ENCODE measurements at regions of chr2 and their contacts with region 1.

Region 1: GRCh38 chr2:68925295-68925896 is 27.3 kb downstream of the GKN2 start:
- DNase-seq: peak; percentile 73
- H3K4me3 Mint-ChIP-seq: no peak overlapping the region
- H3K27ac Mint-ChIP-seq: no peak overlapping the region
- H3K4me1 Mint-ChIP-seq: peaks cover 5% of the 10 kb centered on the region
- H3K27me3 Mint-ChIP-seq: no peaks in the 10 kb centered on the region
- CTCF ChIP-seq: peak; percentile 93

Region 2: GRCh38 chr2:68487773-68488355 is 437.5 kb before region 1 on chr2:
- CTCF ChIA-PET with region 1: interaction called, 14 read pairs
- POLR2A ChIA-PET with region 1: no interaction called
- intact Hi-C with region 1: no loop called
- DNase-seq: peak; percentile 43
- H3K4me3 Mint-ChIP-seq: peak overlapping the region; percentile 28
- H3K27ac Mint-ChIP-seq: no peak overlapping the region
- H3K4me1 Mint-ChIP-seq: peaks cover 6% of the 10 kb centered on the region
- H3K27me3 Mint-ChIP-seq: no peaks in the 10 kb centered on the region
- CTCF ChIP-seq: peak; percentile 40

Region 3: GRCh38 chr2:68715353-68716041 is 209.9 kb before region 1 on chr2:
- CTCF ChIA-PET with region 1: interaction called, 139 read pairs
- POLR2A ChIA-PET with region 1: interaction called, 4 read pairs
- intact Hi-C with region 1: no loop called
- DNase-seq: peak; percentile 79
- H3K4me3 Mint-ChIP-seq: no peak overlapping the region
- H3K27ac Mint-ChIP-seq: no peak overlapping the region
- H3K4me1 Mint-ChIP-seq: no peaks in the 10 kb centered on the region
- H3K27me3 Mint-ChIP-seq: peaks cover 22% of the 10 kb centered on the region
- CTCF ChIP-seq: peak; percentile 79

Region 4: DNA sequence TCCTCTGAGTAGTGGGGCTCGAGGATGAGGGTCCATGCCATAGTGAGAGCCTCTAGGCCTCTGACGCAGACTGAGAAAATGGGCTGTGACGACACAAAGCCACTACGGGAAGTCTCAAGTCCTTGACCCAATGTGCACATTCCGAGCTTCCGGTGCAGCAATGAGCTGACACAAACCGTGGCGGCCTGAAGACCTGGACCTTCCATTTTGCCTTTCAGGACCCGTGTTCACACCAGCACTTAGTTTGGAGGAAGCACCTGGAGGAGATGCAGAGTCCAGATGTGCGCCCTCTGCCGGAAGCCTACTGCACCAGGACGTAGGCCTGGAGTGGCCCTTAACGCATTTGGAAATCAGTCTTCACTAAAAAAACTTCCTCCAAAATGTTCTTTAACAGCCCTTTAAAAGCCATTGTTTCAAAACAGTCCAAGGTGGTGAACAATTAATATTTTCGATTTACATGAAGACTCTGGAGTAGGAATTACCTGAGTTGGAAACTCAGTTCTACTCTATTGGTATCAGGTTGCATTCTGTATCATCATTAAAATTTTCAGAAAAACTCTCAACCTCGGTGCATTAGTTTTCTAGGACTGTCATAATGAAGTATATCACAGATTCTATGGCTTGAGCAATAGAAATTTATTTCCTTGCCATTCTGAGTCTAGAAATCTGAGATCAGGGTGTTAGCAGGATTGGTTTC is 88.1 kb before region 1 on chr2:
- CTCF ChIA-PET with region 1: interaction called, 6 read pairs
- POLR2A ChIA-PET with region 1: no interaction called
- intact Hi-C with region 1: loop called (anchors 1 kb)
- DNase-seq: peak; percentile 84
- H3K4me3 Mint-ChIP-seq: no peak overlapping the region
- H3K27ac Mint-ChIP-seq: no peak overlapping the region
- H3K4me1 Mint-ChIP-seq: peaks cover 4% of the 10 kb centered on the region
- H3K27me3 Mint-ChIP-seq: no peaks in the 10 kb centered on the region
- CTCF ChIP-seq: peak; percentile 68

Region 5: GRCh38 chr2:68936427-68936826 is 11.0 kb after region 1 on chr2:
- CTCF ChIA-PET with region 1: interaction called, 42 read pairs
- POLR2A ChIA-PET with region 1: interaction called, 3 read pairs
- intact Hi-C with region 1: no loop called
- DNase-seq: peak; percentile 57
- H3K4me3 Mint-ChIP-seq: no peak overlapping the region
- H3K27ac Mint-ChIP-seq: peak overlapping the region; percentile 24
- H3K4me1 Mint-ChIP-seq: peaks cover 20% of the 10 kb centered on the region
- H3K27me3 Mint-ChIP-seq: no peaks in the 10 kb centered on the region
- CTCF ChIP-seq: no peak

Measured in MCF 10A (cell line).